HCT116 (cell line): ENCODE measurements at regions of chr10 and their contacts with region 1.

Region 1: GRCh38 chr10:96831867-96832720 is at the start of gene LCOR:
- DNase-seq: peak; percentile 59
- ATAC-seq: peak; percentile 80
- H3K4me3 ChIP-seq: peak within 1 kb of the TSS; percentile 68 to 76
- H3K27ac ChIP-seq: peak within 1 kb of the TSS; percentile 85
- H3K4me1 ChIP-seq: peaks cover 16 to 29% of the 10 kb centered on the region in 2 experiments
- H3K27me3 ChIP-seq: no peaks in the 10 kb centered on the region
- CTCF ChIP-seq: no peak
- POLR2A ChIP-seq: peak; percentile 78
- RAD21 ChIP-seq: no peak
- total RNA-seq, gene LCOR: 59.9 TPM

Region 2: GRCh38 chr10:96374985-96375830 is 456.9 kb before region 1 on chr10:
- CTCF ChIA-PET with region 1: no interaction called
- POLR2A ChIA-PET with region 1: no interaction called
- RAD21 ChIA-PET with region 1: no interaction called
- intact Hi-C with region 1: loop called (anchors 5 kb)
- DNase-seq: peak; percentile 81
- ATAC-seq: peak; percentile 91
- H3K4me3 ChIP-seq: peak overlapping the region; percentile 27 to 29; a peak in 3 of 4 replicates
- H3K27ac ChIP-seq: no peak overlapping the region; the same call in 1 of the 2 replicates
- H3K4me1 ChIP-seq: peaks cover 0 to 24% of the 10 kb centered on the region in 2 experiments; a peak in 3 of 4 replicates
- H3K27me3 ChIP-seq: no peaks in the 10 kb centered on the region
- CTCF ChIP-seq: peak; percentile 93 to 99 (median 97)
- POLR2A ChIP-seq: no peak
- RAD21 ChIP-seq: peak; percentile 93

Region 3: GRCh38 chr10:96395931-96396877 is 435.9 kb before region 1 on chr10:
- CTCF ChIA-PET with region 1: no interaction called
- POLR2A ChIA-PET with region 1: no interaction called
- RAD21 ChIA-PET with region 1: no interaction called
- intact Hi-C with region 1: loop called (anchors 2 kb)
- DNase-seq: peak; percentile 21
- ATAC-seq: peak; percentile 96
- H3K4me3 ChIP-seq: no peak overlapping the region
- H3K27ac ChIP-seq: no peak overlapping the region
- H3K4me1 ChIP-seq: no peaks in the 10 kb centered on the region
- H3K27me3 ChIP-seq: peaks cover 26% of the 10 kb centered on the region
- CTCF ChIP-seq: peak; percentile 79 to 96 (median 93)
- POLR2A ChIP-seq: no peak
- RAD21 ChIP-seq: peak; percentile 86

Region 4: GRCh38 chr10:96577069-96577468 is 255.0 kb before region 1 on chr10:
- CTCF ChIA-PET with region 1: no interaction called
- POLR2A ChIA-PET with region 1: no interaction called
- RAD21 ChIA-PET with region 1: no interaction called
- intact Hi-C with region 1: loop called (anchors 5 kb)
- DNase-seq: no peak
- ATAC-seq: no peak
- H3K4me3 ChIP-seq: no peak overlapping the region
- H3K27ac ChIP-seq: no peak overlapping the region
- H3K4me1 ChIP-seq: peaks cover 0 to 4% of the 10 kb centered on the region in 2 experiments; a peak in 1 of 4 replicates
- H3K27me3 ChIP-seq: no peaks in the 10 kb centered on the region
- CTCF ChIP-seq: no peak
- POLR2A ChIP-seq: no peak
- RAD21 ChIP-seq: no peak

Region 5: GRCh38 chr10:96642973-96643372 is 189.1 kb before region 1 on chr10:
- CTCF ChIA-PET with region 1: interaction called, 3 read pairs
- POLR2A ChIA-PET with region 1: no interaction called
- RAD21 ChIA-PET with region 1: interaction called in 1 of 2 experiments, 3 read pairs
- intact Hi-C with region 1: loop called (anchors 1 kb)
- DNase-seq: peak; percentile 31
- ATAC-seq: peak; percentile 68
- H3K4me3 ChIP-seq: no peak overlapping the region
- H3K27ac ChIP-seq: no peak overlapping the region
- H3K4me1 ChIP-seq: peaks cover 3 to 22% of the 10 kb centered on the region in 2 experiments; a peak in 3 of 4 replicates
- H3K27me3 ChIP-seq: no peaks in the 10 kb centered on the region
- CTCF ChIP-seq: peak; percentile 69 to 77 (median 71); a peak in 5 of 6 replicates
- POLR2A ChIP-seq: no peak
- RAD21 ChIP-seq: peak; percentile 80

Region 6: DNA sequence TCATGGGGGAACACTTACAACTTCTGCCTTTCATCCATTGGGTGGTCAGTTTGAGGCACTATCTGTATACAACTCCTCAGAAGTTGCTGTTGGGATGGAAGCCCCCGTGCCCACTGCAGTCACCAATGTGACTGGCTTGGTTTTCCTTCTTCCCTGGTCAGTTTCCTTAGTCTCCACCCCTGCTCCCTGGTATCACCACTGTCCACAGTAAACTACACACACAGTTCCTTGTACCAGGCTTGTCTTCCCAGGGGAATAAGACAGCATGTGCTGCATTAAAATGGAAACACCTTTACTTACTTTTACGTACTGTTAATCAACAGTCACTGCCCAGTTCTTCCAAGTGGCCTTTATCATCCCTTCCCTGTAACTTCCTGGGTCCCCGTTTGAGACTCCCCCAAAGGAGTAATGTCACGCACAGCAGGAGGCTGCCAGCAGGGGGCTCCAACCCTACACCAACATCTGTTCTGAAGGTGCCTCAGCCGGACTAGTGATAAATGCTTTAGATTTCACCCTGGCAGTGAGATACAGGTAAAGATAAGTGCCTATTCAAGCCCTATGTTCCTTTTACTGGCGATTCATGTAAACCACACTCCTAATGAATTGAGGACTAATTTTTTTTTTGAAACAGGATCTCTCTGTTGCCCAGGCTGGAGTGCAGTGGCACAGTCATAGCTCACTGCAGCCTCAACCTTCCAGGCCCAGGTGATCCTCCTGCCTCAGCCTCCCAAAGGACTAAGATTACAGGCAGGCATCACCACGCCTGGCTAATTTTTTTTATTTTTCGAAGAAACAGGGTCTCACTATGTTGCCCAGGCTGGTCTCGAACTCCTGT is 66.5 kb before region 1 on chr10:
- CTCF ChIA-PET with region 1: no interaction called
- POLR2A ChIA-PET with region 1: no interaction called
- RAD21 ChIA-PET with region 1: no interaction called
- intact Hi-C with region 1: loop called (anchors 1 kb)
- DNase-seq: peak; percentile 37
- ATAC-seq: peak; percentile 98
- H3K4me3 ChIP-seq: no peak overlapping the region
- H3K27ac ChIP-seq: no peak overlapping the region
- H3K4me1 ChIP-seq: no peaks in the 10 kb centered on the region
- H3K27me3 ChIP-seq: no peaks in the 10 kb centered on the region
- CTCF ChIP-seq: peak; percentile 84 to 95 (median 95)
- POLR2A ChIP-seq: no peak
- RAD21 ChIP-seq: peak; percentile 82